Heart left ventricle (tissue), 16 donors: ENCODE measurements at regions of chr4 and their contacts with region 1.

Region 1: DNA sequence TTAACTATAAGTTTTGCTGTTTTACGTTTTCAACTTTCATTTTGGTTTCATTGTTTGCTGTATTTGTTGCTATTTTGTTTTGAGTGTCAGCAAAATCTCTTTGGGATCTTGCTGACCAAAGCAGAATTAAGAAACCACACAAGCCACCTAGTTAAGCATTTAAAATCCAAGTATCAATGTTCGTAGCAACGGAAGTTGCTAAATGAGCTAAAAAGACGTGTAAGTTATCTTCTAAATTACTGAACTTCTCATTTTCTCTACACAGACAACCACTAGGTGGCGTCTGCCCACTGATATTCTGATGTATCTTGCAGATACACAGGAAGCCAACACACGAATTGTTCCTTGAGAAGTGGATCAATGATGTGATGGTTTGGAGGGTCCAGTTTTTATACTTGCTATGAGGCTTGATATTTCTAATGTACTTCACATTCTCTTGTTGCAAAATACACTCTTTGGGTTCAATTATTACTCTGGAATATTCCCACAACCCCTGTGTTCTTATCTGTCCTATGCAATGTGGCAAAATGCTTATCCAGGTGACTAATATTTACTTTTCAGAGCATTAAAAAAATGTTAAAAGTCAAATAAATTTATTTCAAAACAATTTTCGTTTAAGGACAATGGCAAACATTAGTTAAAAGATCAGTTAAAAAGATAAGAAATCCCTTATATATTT is 250.5 kb downstream of the TECRL start:
- DNase-seq: peak in 3 of 5 donors; percentile 32 to 44 (median 35)
- ATAC-seq: no peak
- H3K4me3 ChIP-seq: peak overlapping the region in 9 of 12 donors; percentile 13 to 41 (median 25)
- H3K27ac ChIP-seq: no peak overlapping the region
- H3K4me1 ChIP-seq: peaks cover 0 to 5% (median 0%) of the 10 kb centered on the region in 12 donors
- H3K27me3 ChIP-seq: no peaks in the 10 kb centered on the region
- CTCF ChIP-seq: peak; percentile 64 to 84 (median 72)
- POLR2A ChIP-seq: no peak

Region 2: GRCh38 chr4:64105903-64106302 is 52.9 kb before region 1 on chr4:
- intact Hi-C with region 1: no loop called
- DNase-seq: no peak
- ATAC-seq: no peak
- H3K4me3 ChIP-seq: no peak overlapping the region
- H3K27ac ChIP-seq: no peak overlapping the region
- H3K4me1 ChIP-seq: no peaks in the 10 kb centered on the region
- H3K27me3 ChIP-seq: no peaks in the 10 kb centered on the region
- CTCF ChIP-seq: no peak
- POLR2A ChIP-seq: no peak

Region 3: DNA sequence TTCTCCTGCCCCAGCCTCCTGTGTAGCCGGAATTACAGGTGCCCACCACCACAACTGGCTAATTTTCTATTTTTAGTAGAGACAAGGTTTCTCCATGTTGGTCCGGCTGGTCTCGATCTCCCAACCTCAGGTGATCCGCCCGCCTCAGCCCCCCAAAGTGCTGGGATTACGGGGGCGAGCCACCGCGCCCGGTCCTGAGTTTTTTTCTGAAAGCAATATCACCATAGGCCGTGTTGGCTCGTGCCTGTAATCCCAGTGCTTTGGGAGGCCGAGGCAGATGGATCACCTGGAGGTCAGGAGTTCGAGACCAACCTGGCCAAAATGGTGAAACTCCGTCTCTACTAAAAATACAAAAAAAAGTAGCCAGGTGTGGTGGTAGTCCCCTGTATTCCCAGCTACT is 386.8 kb after region 1 on chr4:
- intact Hi-C with region 1: loop called in 4 of 10 experiments (anchors 2 to 10 kb)
- DNase-seq: peak in 1 of 5 donors; percentile 31
- ATAC-seq: no peak
- H3K4me3 ChIP-seq: no peak overlapping the region
- H3K27ac ChIP-seq: no peak overlapping the region
- H3K4me1 ChIP-seq: no peaks in the 10 kb centered on the region
- H3K27me3 ChIP-seq: no peaks in the 10 kb centered on the region
- CTCF ChIP-seq: no peak
- POLR2A ChIP-seq: no peak

Region 4: DNA sequence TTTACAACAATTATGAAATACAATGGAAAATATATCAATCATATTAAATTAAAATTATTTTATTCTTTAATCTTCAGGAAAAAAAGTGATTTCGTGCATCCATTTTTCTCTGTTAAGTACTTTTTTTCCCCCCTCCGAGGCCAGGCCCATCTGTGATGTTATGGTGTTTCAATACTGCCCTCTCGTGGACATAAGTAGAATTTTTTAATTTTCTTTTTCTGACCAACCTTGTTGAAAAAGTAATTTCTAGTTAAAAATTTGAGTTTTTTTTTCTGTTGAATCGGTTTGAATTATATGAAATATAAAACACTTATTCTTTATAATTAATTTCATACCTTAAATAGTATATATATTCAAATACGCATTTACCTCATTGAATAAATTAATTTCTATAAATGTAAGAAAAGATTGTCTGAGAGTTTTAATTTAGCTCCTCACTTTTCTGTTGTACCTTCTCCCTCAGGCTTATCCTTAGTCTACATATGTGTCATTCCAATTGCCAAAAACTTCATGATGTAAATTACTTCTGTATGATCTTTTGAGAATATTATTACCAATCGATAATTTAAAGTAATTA is 426.3 kb after region 1 on chr4:
- intact Hi-C with region 1: loop called in 4 of 10 experiments (anchors 5 to 10 kb)
- DNase-seq: no peak
- ATAC-seq: no peak
- H3K4me3 ChIP-seq: no peak overlapping the region
- H3K27ac ChIP-seq: no peak overlapping the region
- H3K4me1 ChIP-seq: no peaks in the 10 kb centered on the region
- H3K27me3 ChIP-seq: no peaks in the 10 kb centered on the region
- CTCF ChIP-seq: peak; percentile 36 to 72 (median 62)
- POLR2A ChIP-seq: no peak